CD4-positive, alpha-beta memory T cell (primary cell): ENCODE measurements at regions of chr2 and their contacts with region 1.

Region 1: GRCh38 chr2:224357098-224357901 is 44.6 kb downstream of the FAM124B start:
- DNase-seq: peak; percentile 55 to 66 (median 63)
- H3K4me3 ChIP-seq: no peak overlapping the region
- H3K4me3 Mint-ChIP-seq: no peak overlapping the region
- H3K27ac ChIP-seq: no peak overlapping the region
- H3K27ac Mint-ChIP-seq: no peak overlapping the region
- H3K4me1 ChIP-seq: no peaks in the 10 kb centered on the region
- H3K4me1 Mint-ChIP-seq: no peaks in the 10 kb centered on the region
- H3K27me3 ChIP-seq: no peaks in the 10 kb centered on the region
- H3K27me3 Mint-ChIP-seq: peaks cover 4 to 9% of the 10 kb centered on the region in 2 donors

Region 2: GRCh38 chr2:224343226-224343625 is 14.1 kb before region 1 on chr2:
- CTCF ChIA-PET with region 1: interaction called, 12 read pairs
- POLR2A ChIA-PET with region 1: no interaction called
- intact Hi-C with region 1: no loop called
- DNase-seq: no peak
- H3K4me3 ChIP-seq: no peak overlapping the region
- H3K4me3 Mint-ChIP-seq: no peak overlapping the region
- H3K27ac ChIP-seq: no peak overlapping the region
- H3K27ac Mint-ChIP-seq: no peak overlapping the region
- H3K4me1 ChIP-seq: no peaks in the 10 kb centered on the region
- H3K4me1 Mint-ChIP-seq: no peaks in the 10 kb centered on the region
- H3K27me3 ChIP-seq: no peaks in the 10 kb centered on the region
- H3K27me3 Mint-ChIP-seq: peaks cover 2 to 11% of the 10 kb centered on the region in 2 donors

Region 3: DNA sequence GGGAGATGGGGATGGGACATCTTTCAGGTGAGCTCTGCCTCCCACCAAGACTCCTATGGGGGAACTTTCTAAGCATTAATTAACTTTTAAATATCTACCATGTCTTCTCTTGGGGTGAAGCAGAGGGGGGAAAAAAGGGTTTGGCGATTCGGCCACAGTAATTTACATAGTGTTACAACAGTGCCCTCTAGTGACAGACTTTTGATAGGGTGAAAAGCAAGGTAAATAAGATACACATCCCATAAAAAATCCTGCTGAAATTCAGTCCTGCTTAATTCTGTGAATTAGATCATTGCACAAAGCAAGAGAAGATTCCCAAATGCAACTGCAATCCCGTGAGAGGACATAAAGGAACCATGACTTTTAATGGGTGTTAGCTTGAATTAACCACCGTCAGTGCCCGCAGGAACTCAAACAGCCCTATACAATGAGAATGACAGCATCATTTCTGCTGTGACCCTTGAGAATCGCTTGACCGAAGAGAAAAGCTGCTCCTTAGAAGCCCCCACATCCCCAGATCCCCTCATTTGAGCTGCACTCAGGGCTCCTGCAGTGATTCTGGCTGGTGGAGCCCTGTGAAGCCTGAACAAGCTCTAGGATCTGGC is 11.8 kb after region 1 on chr2:
- CTCF ChIA-PET with region 1: interaction called, 20 read pairs
- POLR2A ChIA-PET with region 1: no interaction called
- intact Hi-C with region 1: no loop called
- DNase-seq: peak in 4 of 5 donors; percentile 15 to 32 (median 26)
- H3K4me3 ChIP-seq: no peak overlapping the region
- H3K4me3 Mint-ChIP-seq: no peak overlapping the region
- H3K27ac ChIP-seq: no peak overlapping the region
- H3K27ac Mint-ChIP-seq: no peak overlapping the region
- H3K4me1 ChIP-seq: no peaks in the 10 kb centered on the region
- H3K4me1 Mint-ChIP-seq: no peaks in the 10 kb centered on the region
- H3K27me3 ChIP-seq: no peaks in the 10 kb centered on the region
- H3K27me3 Mint-ChIP-seq: peaks cover 2 to 3% of the 10 kb centered on the region in 2 donors

Region 4: GRCh38 chr2:224650815-224651439 is 293.6 kb after region 1 on chr2:
- CTCF ChIA-PET with region 1: interaction called, 218 read pairs
- POLR2A ChIA-PET with region 1: no interaction called
- intact Hi-C with region 1: loop called (anchors 1 kb)
- DNase-seq: peak in 4 of 5 donors; percentile 49 to 51 (median 50)
- H3K4me3 ChIP-seq: no peak overlapping the region
- H3K4me3 Mint-ChIP-seq: no peak overlapping the region
- H3K27ac ChIP-seq: no peak overlapping the region
- H3K27ac Mint-ChIP-seq: peak overlapping the region in 1 of 7 donors; percentile 4
- H3K4me1 ChIP-seq: no peaks in the 10 kb centered on the region
- H3K4me1 Mint-ChIP-seq: peaks cover 0 to 3% (median under 1%) of the 10 kb centered on the region in 4 donors
- H3K27me3 ChIP-seq: no peaks in the 10 kb centered on the region
- H3K27me3 Mint-ChIP-seq: peaks cover 3 to 9% of the 10 kb centered on the region in 2 donors

Region 5: GRCh38 chr2:224778474-224778877 is 421.2 kb after region 1 on chr2:
- CTCF ChIA-PET with region 1: interaction called, 12 read pairs
- POLR2A ChIA-PET with region 1: no interaction called
- intact Hi-C with region 1: loop called (anchors 1 kb)
- DNase-seq: peak; percentile 46 to 58 (median 54)
- H3K4me3 ChIP-seq: no peak overlapping the region
- H3K4me3 Mint-ChIP-seq: no peak overlapping the region
- H3K27ac ChIP-seq: no peak overlapping the region
- H3K27ac Mint-ChIP-seq: peak overlapping the region in 3 of 7 donors; percentile 0 to 65 (median 25)
- H3K4me1 ChIP-seq: no peaks in the 10 kb centered on the region
- H3K4me1 Mint-ChIP-seq: peaks cover 0 to 5% (median 0%) of the 10 kb centered on the region in 4 donors
- H3K27me3 ChIP-seq: no peaks in the 10 kb centered on the region
- H3K27me3 Mint-ChIP-seq: no peaks in the 10 kb centered on the region